ENCODE measurements at regions of chr22 and their contacts with region 1.

Region 1: DNA sequence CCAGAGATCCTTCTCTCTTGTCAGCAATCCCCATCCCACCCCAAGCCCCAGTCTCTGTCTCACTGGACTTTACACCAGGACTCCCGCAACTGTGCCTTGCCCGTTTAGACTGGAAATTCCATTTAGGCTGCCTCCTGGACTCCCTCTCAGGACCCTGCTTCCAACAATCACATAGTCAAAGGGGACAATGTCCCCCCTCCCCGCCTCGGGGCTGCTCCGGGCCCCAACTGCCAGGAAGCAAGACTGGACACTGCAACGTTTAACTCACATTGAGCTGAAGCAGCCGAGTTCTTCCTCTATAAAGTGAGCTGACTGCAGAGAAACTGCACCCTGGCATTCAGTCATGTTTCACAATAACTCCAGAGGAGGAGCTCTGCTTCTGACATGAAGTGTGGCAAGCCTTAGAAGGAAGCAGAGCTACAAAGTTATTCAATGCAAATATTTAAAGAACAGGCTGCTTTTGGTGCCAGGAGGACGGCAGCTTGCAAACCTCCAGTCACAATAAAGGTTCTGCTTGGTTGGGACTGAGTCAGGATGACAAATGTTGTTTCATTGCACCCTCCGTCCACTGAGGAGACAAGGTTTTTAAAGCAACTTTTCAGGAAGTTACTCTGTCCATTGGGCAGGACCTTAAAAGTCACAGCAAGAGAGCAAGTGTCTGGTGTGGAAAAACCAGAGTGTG is 19.9 kb downstream of the PACSIN2 start:
- DNase-seq: no peak
- H3K4me3 ChIP-seq: peak overlapping the region; percentile 43 to 62 (median 52)
- H3K27ac ChIP-seq: peak overlapping the region; percentile 87 to 95 (median 94)
- H3K4me1 ChIP-seq: peaks cover 60 to 96% (median 87%) of the 10 kb centered on the region in 4 donors
- H3K27me3 ChIP-seq: no peaks in the 10 kb centered on the region
- CTCF ChIP-seq: peak in 1 of 3 experiments; percentile 15
- EP300 ChIP-seq: no peak
- POLR2A ChIP-seq: peak; percentile 53

Region 2: DNA sequence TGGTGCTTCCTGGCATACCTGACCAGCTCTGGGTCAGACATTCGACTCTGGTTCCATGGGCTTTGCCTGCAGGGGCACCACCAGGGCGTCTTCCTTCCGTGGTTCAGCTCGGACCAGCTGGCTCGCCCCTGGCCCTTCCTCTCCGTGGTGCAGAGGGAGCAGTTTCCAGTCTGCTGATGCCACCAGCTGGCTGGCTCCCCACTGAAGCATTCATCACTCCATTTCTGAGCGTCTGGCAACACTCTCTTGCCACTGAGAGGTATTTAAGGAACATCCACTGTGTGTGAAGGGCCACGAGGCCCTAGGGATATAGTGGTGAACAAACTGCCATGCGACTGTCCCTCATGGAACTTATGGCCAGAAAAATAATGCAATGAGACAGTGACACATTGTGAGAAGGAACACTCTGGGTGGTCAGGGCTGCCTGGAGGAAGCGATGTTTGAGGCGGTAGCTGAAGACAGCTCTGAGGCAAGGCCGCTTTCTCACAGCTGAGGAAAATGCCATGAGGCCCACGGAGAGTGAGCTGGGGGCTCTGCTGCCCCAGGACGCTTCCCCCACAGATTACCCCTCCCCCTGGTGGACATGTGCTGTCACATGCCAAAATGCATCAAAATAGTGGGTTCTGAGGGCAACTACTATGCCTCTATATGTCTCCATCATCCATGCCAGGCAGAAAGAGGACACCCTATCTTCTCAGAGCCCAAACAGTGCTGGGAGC is 93.1 kb before region 1 on chr22:
- intact Hi-C with region 1: loop called (anchors 5 kb)
- DNase-seq: no peak
- H3K4me3 ChIP-seq: no peak overlapping the region
- H3K27ac ChIP-seq: peak overlapping the region; percentile 68 to 77 (median 74)
- H3K4me1 ChIP-seq: peaks cover 72 to 91% (median 78%) of the 10 kb centered on the region in 4 donors
- H3K27me3 ChIP-seq: no peaks in the 10 kb centered on the region
- CTCF ChIP-seq: peak in 1 of 3 experiments; percentile 14
- EP300 ChIP-seq: no peak
- POLR2A ChIP-seq: no peak

Region 3: GRCh38 chr22:43014869-43015676 is 20.1 kb after region 1 on chr22 and contains the start of gene PACSIN2:
- intact Hi-C with region 1: no loop called
- DNase-seq: peak; percentile 100
- H3K4me3 ChIP-seq: peak within 1 kb of the TSS; percentile 92 to 97 (median 95)
- H3K27ac ChIP-seq: peak within 1 kb of the TSS; percentile 80 to 89 (median 88)
- H3K4me1 ChIP-seq: peaks cover 15 to 47% (median 43%) of the 10 kb centered on the region in 4 donors
- H3K27me3 ChIP-seq: no peaks in the 10 kb centered on the region
- CTCF ChIP-seq: no peak
- EP300 ChIP-seq: no peak
- POLR2A ChIP-seq: peak; percentile 86
- total RNA-seq, gene PACSIN2: 91.1 to 147 (median 116) TPM

Measured in esophagus muscularis mucosa (tissue), 4 donors.